SK-N-SH (cell line): ENCODE measurements at regions of chr12 and their contacts with region 1.

Region 1: DNA sequence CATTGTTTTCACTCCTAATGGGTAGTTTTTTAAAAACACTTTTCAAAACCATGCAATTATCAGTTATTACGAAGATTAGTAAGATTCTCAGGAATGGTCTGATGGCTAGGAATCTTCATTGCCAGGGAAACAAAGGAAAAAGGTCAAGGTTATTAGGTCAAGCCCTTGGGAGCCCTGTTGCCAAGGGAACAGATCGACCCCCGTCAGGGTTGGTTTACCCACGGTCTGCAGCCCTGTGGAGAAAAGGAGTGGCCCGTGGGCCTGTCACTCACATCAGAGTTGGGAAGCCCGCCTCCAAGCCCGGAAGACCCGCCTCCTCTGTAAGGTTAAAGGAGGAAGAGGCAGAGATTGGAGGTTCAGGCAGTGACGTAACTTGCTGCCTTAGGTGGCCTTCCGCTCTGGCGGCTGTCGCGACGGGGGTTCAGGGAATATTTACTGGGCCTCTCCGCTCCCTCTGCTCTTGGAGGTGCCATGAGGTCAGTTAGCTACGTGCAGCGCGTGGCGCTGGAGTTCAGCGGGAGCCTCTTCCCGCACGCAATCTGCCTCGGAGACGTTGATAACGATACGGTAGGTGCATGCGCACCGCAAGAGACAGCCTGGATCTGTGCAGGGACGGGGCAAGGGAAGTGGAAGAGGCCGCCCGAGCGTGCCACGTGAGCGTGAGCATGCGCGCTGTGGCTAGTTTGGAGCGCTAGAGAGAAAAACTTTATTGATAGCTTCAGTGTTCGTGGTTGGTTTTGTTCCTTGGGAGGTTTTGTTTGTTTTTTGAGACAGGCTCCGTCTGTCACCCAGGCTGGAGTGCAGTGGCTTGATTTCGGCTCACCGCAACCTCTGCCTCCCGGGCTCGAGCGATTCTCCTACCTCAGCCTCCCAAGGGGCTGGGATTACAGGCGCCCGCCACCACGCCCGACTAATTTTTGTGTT is at the start of gene ITFG2:
- DNase-seq: peak; percentile 93
- H3K4me3 ChIP-seq: peak within 1 kb of the TSS; percentile 68 to 81
- H3K27ac ChIP-seq: peak within 1 kb of the TSS; percentile 87 to 96
- H3K4me1 ChIP-seq: peaks cover 0 to 3% of the 10 kb centered on the region in 2 experiments; a peak in 1 of 4 replicates
- H3K27me3 ChIP-seq: no peaks in the 10 kb centered on the region
- CTCF ChIP-seq: no peak
- EP300 ChIP-seq: peak in 1 of 2 experiments; percentile 26; a peak in 2 of 4 replicates
- RAD21 ChIP-seq: no peak
- polyA plus RNA-seq, gene ITFG2: 27.2 and 30.1 TPM in 2 replicates

Region 2: DNA sequence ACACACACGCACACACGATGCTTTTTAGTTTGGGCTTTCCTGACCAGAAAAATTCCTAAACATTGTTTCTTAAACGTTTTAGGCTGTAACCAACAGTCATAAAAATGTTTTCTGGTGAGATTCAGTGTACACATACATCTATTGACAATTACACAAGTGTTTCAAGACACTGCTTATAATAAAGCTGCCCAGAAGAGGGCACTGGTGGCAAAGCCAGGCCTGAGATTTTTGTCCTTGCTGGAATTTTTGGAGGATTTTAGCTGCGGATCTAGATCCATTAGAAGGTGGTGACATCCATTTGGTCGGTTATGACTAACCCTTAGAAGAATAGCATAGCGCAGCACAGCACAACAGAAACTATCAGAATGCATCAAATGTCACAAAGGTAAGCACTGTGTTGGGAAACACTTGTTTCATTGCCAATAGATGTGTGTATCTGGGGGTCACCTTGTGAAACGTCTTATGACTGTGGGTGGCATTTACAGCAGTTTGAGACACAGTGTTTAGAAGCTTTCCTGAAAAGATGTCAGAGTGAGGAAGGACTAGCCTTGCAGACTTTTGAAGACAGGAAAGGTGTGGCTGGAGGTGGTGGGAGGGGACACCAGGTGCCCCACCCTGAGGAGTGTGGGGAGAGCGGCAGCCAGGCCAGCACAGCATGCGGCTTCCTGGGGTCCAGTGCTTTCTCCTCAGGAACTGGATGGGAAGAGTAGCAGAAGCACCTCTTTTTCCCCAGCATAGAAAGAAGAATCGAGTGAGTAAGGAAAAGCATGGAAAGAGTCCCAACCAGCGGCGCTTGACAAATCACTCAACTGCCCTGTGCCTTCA is 72.5 kb before region 1 on chr12:
- CTCF ChIA-PET with region 1: interaction called, 12 read pairs
- POLR2A ChIA-PET with region 1: no interaction called
- DNase-seq: peak; percentile 46
- H3K4me3 ChIP-seq: no peak overlapping the region
- H3K27ac ChIP-seq: no peak overlapping the region
- H3K4me1 ChIP-seq: no peaks in the 10 kb centered on the region
- H3K27me3 ChIP-seq: peaks cover 22% of the 10 kb centered on the region
- CTCF ChIP-seq: peak; percentile 73
- EP300 ChIP-seq: no peak
- RAD21 ChIP-seq: peak; percentile 86

Region 3: DNA sequence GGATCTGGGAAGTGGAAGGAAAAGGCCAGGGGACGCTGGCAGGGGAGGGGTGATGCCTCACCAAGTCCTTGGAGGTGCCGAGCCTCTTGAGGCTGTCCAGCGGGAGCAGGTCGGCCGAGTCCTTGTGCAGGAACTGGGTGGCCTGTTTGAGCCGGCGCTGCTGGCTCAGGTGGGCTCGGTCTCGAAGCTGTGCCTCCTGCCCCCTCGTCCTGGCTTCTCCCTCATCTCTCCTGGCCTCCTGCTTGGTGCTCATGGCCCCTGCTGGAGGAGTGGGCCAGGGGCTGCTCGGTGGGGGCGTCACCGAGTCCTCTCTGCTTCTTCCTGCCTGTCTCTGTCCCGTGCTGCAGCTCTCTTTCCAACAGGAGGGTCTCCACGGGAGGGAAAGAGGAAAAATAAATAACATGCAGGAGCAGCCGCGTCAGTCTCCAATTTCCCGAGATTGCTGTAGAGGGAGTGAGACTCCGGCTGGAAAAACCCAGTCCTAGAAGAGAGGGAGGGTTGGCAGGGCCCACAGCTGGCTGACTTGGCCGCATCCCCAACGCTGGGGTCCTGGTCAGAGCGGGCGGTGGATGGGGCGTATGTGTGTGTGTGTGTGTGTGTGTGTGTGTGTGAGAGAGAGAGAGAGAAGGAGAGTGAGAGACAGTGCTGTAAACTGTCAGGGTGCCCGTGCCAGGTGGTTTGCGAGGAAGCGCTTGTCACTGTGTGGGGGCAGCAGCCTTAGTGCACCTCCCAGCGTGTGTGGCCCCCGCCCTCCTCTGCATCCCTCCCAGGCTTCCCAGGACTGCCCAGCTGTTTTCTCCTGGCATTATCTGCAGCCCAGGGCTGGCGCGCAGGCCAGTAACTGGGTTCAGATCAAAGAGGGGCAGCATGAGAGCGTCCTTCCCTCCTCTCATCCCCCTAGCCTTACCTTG is 22.3 kb after region 1 on chr12 and contains the start of gene NRIP2:
- CTCF ChIA-PET with region 1: interaction called, 14 read pairs
- POLR2A ChIA-PET with region 1: interaction called, 4 read pairs
- DNase-seq: peak; percentile 90
- H3K4me3 ChIP-seq: no peak within 1 kb of the TSS; a peak in 1 of 4 replicates
- H3K27ac ChIP-seq: no peak within 1 kb of the TSS
- H3K4me1 ChIP-seq: peaks cover 4 to 15% of the 10 kb centered on the region in 2 experiments; a peak in 3 of 4 replicates
- H3K27me3 ChIP-seq: no peaks in the 10 kb centered on the region
- CTCF ChIP-seq: no peak
- EP300 ChIP-seq: no peak
- RAD21 ChIP-seq: peak; percentile 26; the same call in 1 of the 2 replicates
- polyA plus RNA-seq, gene NRIP2: not detected in 2 replicates